Sciatic nerve (tissue), 2 donors: ENCODE measurements at regions of chr10 and their contacts with region 1.

Region 1: DNA sequence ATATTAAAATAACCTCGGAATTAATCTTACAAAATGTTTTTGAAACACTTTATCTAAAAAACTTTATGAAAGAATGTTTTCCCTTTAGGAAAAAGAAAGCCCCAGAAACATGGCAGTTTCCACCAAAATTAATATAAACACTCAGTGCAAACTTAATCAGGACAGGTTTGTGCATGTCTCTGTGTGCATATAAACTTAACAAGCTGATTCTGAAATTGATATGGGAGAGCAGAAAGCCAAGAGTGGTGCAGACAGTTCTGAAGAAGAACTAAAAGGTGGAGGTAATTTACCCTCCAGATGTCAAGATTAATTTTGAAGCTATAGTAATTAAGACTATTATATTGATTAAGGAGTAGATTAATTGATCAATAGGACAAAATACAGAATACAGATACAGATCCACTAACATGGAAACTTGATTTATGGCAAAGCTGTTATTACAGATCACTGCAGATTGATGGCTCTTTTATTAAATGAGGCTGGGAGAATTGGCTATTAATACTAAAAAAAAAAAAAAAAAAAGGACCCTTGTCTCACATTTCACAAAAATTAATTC is 709.7 kb downstream of the GATA3 start:
- DNase-seq: no peak
- ATAC-seq: no peak

Region 2: DNA sequence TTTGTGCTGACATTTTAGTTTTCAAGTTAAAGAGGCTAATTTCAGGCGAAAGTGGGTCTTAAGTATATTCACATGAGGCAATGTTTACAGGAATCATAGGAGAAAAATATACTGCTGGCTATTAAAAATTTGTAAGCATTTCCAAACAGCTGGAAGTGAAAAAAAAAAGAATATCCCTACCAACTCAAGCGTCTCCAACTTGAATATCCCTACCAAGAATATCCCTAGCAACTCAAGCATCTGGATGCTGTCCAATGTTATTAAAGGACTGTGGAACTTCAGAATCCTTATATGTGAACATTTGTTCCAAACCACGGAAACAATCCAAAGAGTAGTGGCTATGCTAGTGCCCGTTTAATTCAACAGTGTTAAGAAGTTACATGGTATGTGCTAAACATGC is 593.2 kb after region 1 on chr10:
- intact Hi-C with region 1: loop called (anchors 5 kb)
- DNase-seq: no peak
- ATAC-seq: no peak